Activated CD4-positive, alpha-beta T cell treated with anti-CD3 and anti-CD28 coated beads, Interleukin-2, amount 10 ng/mL, durations not matched to agents 7 days and 5 days (primary cell): ENCODE measurements at regions of chr7 and their contacts with region 1.

Region 1: DNA sequence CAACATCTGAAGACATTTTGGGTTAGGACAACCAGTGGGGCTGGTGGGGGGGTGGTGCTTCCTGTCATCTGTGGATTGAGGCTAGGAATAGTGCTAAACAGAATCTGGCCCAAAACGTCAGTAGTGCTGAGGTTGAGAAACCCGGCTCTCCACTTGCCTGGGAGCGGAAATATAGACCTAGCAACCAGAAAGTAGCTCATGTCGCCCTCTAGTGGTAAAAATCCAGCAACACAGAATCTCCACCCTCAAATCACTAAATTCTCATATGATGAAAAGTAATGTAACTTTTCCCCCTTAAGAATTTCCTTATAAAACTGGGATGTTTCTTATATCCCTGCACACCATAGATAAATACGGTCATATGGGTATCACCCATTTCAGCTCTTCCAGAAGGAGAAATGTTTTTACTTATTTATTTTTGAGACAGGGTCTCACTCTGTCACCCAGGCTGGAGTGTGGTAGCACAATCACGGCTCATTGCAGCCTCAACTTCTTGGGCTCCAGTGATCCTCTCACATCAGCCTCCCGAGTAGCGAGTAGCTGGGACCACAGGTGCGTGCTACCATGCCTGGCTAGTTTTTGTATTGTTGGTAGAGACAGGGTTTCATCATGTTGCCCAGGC is 34.4 kb downstream of the ZC3HAV1 start:
- DNase-seq: peak; percentile 83
- H3K4me3 Mint-ChIP-seq: peak overlapping the region; percentile 54
- H3K27ac Mint-ChIP-seq: peak overlapping the region; percentile 70
- H3K4me1 Mint-ChIP-seq: peaks cover 63% of the 10 kb centered on the region
- H3K27me3 Mint-ChIP-seq: no peaks in the 10 kb centered on the region

Region 2: GRCh38 chr7:138865843-138866242 is 209.3 kb before region 1 on chr7:
- CTCF ChIA-PET with region 1: no interaction called
- POLR2A ChIA-PET with region 1: no interaction called
- DNase-seq: peak; percentile 73
- H3K4me3 Mint-ChIP-seq: no peak overlapping the region
- H3K27ac Mint-ChIP-seq: peak overlapping the region; percentile 31
- H3K4me1 Mint-ChIP-seq: peaks cover 24% of the 10 kb centered on the region
- H3K27me3 Mint-ChIP-seq: no peaks in the 10 kb centered on the region

Region 3: GRCh38 chr7:139043823-139044812 is 31.0 kb before region 1 on chr7:
- CTCF ChIA-PET with region 1: interaction called, 225 read pairs
- POLR2A ChIA-PET with region 1: no interaction called
- DNase-seq: peak; percentile 72
- H3K4me3 Mint-ChIP-seq: peak overlapping the region; percentile 12
- H3K27ac Mint-ChIP-seq: peak overlapping the region; percentile 86
- H3K4me1 Mint-ChIP-seq: peaks cover 79% of the 10 kb centered on the region
- H3K27me3 Mint-ChIP-seq: no peaks in the 10 kb centered on the region

Region 4: GRCh38 chr7:139058943-139059342 is 16.2 kb before region 1 on chr7:
- CTCF ChIA-PET with region 1: interaction called, 225 read pairs
- POLR2A ChIA-PET with region 1: no interaction called
- DNase-seq: no peak
- H3K4me3 Mint-ChIP-seq: no peak overlapping the region
- H3K27ac Mint-ChIP-seq: peak overlapping the region; percentile 38
- H3K4me1 Mint-ChIP-seq: peaks cover 57% of the 10 kb centered on the region
- H3K27me3 Mint-ChIP-seq: no peaks in the 10 kb centered on the region

Region 5: DNA sequence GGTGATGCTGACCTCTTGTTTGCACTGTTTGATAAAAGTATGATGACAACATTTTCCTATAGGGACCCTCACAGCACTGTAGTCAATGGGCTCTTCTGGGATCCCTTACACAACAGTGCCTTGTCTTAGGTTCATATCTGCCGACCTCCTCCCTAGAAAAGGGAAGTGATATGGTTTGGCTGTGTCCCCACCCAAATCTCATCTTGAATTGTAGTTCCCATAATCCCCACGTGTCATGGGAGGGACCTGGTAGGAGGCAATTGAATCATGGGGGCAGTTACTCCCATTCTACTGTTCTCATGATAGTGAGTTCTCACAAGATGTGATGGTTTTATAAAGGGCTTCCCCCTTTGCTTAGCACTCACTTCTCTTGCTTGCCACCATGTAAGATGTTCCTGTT is 11.3 kb after region 1 on chr7:
- CTCF ChIA-PET with region 1: interaction called, 38 read pairs
- POLR2A ChIA-PET with region 1: no interaction called
- DNase-seq: no peak
- H3K4me3 Mint-ChIP-seq: no peak overlapping the region
- H3K27ac Mint-ChIP-seq: peak overlapping the region; percentile 78
- H3K4me1 Mint-ChIP-seq: peaks cover 87% of the 10 kb centered on the region
- H3K27me3 Mint-ChIP-seq: no peaks in the 10 kb centered on the region

Region 6: GRCh38 chr7:139095194-139095659 is 20.1 kb after region 1 on chr7:
- CTCF ChIA-PET with region 1: interaction called, 19 read pairs
- POLR2A ChIA-PET with region 1: no interaction called
- DNase-seq: peak; percentile 91
- H3K4me3 Mint-ChIP-seq: peak overlapping the region; percentile 75
- H3K27ac Mint-ChIP-seq: peak overlapping the region; percentile 91
- H3K4me1 Mint-ChIP-seq: peaks cover 89% of the 10 kb centered on the region
- H3K27me3 Mint-ChIP-seq: no peaks in the 10 kb centered on the region

Region 7: GRCh38 chr7:139426258-139427028 is 351.3 kb after region 1 on chr7:
- CTCF ChIA-PET with region 1: no interaction called
- POLR2A ChIA-PET with region 1: no interaction called
- DNase-seq: no peak
- H3K4me3 Mint-ChIP-seq: no peak overlapping the region
- H3K27ac Mint-ChIP-seq: no peak overlapping the region
- H3K4me1 Mint-ChIP-seq: no peaks in the 10 kb centered on the region
- H3K27me3 Mint-ChIP-seq: no peaks in the 10 kb centered on the region